Activated CD4-positive, alpha-beta memory T cell treated with anti-CD3 and anti-CD28 coated beads for 36 hours (primary cell): ENCODE measurements at regions of chr2 and their contacts with region 1.

Region 1: DNA sequence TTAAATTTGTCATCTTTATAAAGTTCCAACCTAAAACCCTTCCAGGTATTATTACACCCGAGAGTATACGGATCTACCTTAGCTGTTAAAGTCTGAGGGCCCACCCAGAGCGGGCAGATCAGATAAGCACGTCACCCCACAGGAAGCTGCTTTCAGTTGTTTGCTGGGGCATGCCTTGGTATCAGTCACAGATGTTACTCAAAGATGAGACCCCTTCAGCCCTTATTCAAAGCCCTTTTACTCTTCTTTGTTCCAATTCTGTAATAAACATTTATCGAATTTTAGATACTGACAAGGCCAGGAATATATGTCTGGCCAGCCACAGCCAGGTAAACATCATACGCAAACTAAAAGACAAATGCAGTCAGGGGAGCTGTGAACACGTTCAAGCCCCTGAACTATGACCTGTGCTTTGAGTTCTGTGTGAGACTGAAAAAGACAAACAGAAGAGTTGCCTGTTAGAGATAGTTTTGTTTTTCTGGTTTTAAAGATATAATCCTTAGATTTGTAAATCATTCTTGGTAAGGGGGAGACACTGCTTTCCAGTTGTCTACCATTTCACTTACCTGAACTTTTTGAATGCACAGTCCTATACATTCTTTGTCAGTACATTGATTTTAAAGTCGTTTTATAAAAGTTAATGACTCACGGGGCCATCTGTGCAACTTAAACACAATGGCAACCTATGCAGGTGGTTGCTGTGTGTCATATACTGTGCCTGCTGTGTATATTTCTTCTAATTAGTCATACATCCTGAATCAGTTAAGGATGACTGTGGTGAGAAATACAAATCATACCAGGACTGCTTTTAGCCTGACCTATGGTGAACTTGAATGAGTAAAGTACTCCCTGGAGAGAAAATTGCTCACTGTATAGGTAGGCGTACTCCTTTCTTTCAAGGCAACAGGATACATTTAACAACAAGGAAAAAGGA is 100.5 kb upstream of the ITPRID2 start:
- DNase-seq: peak; percentile 52
- H3K4me3 Mint-ChIP-seq: no peak overlapping the region
- H3K27ac Mint-ChIP-seq: peak overlapping the region; percentile 46
- H3K4me1 Mint-ChIP-seq: peaks cover 19% of the 10 kb centered on the region
- H3K27me3 Mint-ChIP-seq: peaks cover 12% of the 10 kb centered on the region

Region 2: DNA sequence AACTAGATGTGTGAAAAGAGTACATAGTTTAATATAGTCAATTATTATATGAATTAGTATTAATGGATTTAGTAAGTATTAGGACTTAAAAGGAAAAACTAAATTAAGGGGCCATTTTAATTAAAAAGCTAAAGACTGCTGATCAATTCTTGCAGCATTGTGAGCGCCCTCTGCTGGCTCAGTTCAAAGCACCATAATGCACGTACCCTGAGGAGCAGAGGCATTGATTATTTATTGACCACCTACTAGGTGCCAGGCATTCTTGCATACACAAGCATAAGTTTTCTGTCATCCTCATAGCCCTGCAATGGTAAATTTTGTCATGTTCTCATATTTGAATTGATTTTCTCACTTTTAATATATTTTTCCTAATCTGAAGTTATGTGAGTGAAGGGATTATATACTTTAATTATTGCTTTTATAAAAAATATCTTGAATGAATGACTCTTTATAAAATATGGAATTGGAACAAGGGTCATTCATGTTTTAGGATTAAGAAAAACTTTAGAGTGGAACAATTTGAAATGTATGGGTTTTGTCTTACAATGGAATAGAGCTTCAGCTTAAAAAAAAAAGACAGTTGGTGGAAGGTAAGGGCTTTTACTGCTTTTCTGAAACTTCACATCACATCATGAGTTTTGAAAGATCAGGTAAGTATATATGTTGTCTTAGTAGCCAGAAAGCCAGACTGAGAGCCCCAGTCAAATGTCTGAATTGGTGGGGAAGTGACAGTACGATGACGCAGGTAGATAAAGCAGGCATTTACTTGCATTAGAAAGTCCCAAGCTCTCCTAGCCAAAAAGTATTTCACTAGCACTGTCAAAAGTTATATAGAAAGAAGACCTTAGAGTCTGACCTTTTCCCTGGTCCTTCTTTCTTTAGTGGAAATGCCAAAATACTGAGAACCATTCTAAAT is 324.1 kb before region 1 on chr2:
- CTCF ChIA-PET with region 1: no interaction called
- POLR2A ChIA-PET with region 1: no interaction called
- intact Hi-C with region 1: loop called (anchors 5 kb)
- DNase-seq: peak; percentile 83
- H3K4me3 Mint-ChIP-seq: no peak overlapping the region
- H3K27ac Mint-ChIP-seq: peak overlapping the region; percentile 77
- H3K4me1 Mint-ChIP-seq: peaks cover 84% of the 10 kb centered on the region
- H3K27me3 Mint-ChIP-seq: no peaks in the 10 kb centered on the region

Region 3: DNA sequence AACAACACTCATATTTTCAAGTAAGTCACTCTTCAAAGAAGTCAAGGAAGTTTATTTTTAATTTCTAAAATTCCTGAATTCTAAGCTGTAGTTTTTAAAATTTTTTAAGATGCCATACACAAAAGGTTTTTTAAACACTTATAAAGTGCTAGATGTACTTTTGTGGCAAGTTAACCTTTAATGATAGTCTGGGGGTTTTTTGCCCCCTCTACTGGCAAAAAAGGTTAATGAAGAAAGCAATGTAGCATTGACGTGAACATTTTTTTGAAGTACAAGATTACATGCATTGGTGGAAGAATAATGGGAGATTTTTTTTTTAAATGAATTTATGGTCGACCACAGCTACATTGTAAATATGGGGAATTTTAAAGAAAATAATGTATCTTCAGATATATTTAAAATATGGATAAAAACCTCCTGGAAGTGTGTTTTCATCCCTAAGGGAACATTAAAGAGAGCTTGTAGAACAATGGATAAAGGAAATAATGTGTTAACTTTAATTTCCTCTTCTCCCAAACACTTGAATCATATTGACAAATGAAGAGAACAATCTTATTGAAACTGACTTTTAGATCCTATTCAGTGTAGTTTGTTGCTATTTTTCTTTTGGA is 113.1 kb after region 1 on chr2:
- CTCF ChIA-PET with region 1: no interaction called
- POLR2A ChIA-PET with region 1: no interaction called
- intact Hi-C with region 1: loop called (anchors 1 kb)
- DNase-seq: no peak
- H3K4me3 Mint-ChIP-seq: no peak overlapping the region
- H3K27ac Mint-ChIP-seq: no peak overlapping the region
- H3K4me1 Mint-ChIP-seq: peaks cover 13% of the 10 kb centered on the region
- H3K27me3 Mint-ChIP-seq: no peaks in the 10 kb centered on the region

Region 4: DNA sequence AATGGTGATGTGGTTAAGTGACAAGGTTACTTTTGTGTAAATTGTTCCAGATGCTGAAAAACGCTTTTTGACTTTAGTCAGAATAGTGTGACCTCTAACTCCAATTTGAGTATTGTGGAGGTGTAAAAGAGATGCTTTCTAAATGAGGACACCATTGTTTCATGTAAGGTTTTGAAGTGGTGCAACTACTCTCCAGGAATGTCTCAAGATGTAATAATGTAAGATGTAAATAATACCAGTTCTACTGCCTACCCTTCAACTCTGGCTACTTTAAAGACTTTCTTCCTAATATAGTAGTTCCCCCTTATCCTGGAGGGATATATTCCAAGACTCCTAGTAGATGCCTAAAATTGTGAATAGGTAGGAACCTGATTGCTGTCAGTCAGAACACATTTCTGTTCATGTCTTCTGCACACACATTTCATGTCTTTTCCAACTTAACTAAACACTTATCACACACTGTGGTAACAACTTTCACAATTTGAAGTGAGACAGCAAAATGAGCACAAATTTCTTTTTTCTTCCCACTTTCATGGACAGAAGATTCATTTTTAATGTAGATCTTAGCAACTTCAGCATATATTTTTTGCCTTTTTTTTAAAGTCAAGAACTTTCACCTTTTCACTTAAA is 155.6 kb after region 1 on chr2:
- CTCF ChIA-PET with region 1: no interaction called
- POLR2A ChIA-PET with region 1: no interaction called
- intact Hi-C with region 1: loop called (anchors 2 kb)
- DNase-seq: no peak
- H3K4me3 Mint-ChIP-seq: no peak overlapping the region
- H3K27ac Mint-ChIP-seq: no peak overlapping the region
- H3K4me1 Mint-ChIP-seq: peaks cover 4% of the 10 kb centered on the region
- H3K27me3 Mint-ChIP-seq: peaks cover 36% of the 10 kb centered on the region